ENCODE measurements at regions of chr14 and their contacts with region 1.

Region 1: GRCh38 chr14:77320238-77320935 is at the start of gene POMT2:
- DNase-seq: peak; percentile 97
- ATAC-seq: peak; percentile 85
- total RNA-seq, gene POMT2: 14.7 TPM

Region 2: DNA sequence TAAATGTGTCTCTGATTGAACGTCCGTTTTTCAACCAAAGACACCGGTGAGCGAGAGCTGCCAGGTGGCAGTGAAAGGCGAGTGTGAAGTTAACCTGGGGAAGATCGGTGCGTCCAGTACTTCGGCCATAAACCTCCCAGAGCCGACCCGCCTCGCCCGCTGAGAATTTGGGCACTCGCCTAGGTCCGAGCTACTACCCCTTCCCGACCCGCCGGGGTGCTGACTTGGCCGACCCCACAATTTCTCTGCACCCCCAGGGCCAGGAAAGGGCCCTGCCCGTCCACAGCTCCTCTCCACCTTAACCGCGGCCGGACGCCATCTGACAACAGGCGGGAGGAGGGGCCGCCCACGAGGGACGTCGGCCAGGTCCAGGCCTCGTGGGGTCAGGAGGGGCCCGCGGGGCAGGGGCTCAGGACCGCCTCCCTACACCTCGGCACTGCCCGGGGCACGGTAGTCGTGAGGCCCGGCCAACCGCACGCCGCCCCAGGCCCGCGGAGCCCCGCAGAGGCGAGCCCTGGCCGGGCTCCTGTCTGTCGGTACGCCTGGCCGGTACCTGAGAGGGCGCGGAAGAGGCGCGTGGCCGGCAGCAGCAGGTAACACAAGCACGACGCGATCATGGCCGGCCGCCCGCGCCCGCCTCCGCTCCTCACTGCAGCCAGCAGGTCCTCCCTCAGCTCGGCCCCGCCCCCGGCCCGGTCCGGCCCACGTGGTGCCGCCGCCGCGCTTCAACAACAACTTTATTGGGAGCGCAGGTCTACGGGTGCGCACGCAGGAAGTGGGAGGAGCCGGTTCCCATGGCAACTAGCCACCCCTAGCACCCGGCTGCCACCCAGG is 508.0 kb before region 1 on chr14 and contains the start of gene ANGEL1:
- intact Hi-C with region 1: loop called (anchors 5 kb)
- DNase-seq: peak; percentile 98
- ATAC-seq: peak; percentile 92
- total RNA-seq, gene ANGEL1: 10.5 TPM

Region 3: DNA sequence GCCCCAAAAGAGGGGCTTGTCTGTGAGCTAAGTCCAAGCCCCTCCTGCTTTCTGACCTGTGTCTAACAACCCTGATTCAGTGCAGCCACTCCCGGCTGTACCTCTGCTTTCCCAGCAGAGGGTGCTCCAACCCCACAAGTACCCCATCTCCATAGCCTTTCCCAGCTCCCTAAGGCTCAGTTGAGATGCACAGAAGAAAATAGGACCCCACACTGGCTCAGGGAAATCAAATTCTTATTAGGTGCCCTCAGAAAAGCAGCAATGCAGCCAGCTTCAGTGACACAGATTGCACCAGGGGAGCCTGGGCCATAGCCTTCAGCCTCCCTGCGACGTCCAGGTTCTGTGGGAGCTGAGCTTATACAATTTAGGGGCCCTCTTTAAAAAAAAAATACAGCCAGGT is 444.3 kb before region 1 on chr14:
- intact Hi-C with region 1: loop called (anchors 5 kb)
- DNase-seq: no peak
- ATAC-seq: peak; percentile 92

Region 4: GRCh38 chr14:77151918-77152588 is 168.3 kb before region 1 on chr14:
- intact Hi-C with region 1: loop called (anchors 1 kb)
- DNase-seq: no peak
- ATAC-seq: no peak

Region 5: DNA sequence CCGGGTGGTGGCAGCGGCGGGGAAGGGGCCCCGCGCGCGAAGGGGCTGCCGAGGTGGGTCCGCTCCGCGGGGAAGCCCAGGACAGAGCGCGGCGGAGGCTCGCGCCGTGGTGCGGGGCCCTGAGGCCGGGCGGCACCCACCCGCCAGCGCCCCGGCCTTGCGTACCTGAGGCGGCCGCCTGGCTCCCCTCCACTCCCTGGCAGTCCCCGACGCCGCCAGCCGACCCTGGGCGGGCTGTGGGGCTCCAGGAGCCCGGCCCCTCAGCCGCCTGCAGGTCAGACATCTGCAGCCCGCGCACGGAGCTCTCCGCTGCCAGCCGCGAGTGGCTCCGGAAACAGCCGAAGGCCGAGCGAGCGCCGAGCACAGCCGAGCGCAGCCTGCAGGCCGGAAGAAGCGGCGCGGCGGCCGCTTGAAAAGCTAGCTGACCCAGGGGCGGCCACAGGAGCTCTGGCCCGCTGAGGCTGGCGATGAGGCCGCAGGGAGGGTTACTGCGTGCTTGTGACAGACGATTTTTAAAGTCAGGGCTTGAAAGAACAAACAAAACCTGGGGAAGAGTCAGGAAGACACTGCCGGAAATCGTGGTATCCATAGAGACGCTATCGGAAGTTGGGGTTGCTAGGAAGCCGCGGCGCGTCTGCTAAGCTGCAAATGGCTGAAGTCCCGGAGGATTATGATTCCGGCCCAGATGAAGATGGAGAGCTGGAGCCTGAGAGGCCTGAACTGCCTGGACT is 56.5 kb after region 1 on chr14 and contains the starts of genes SAMD15 and TMED8:
- intact Hi-C with region 1: loop called (anchors 5 kb)
- DNase-seq: peak; percentile 93
- ATAC-seq: peak; percentile 98
- total RNA-seq, gene SAMD15: 0.08 TPM
- total RNA-seq, gene TMED8: 5.1 TPM

Region 6: GRCh38 chr14:77457522-77458290 is 137.3 kb after region 1 on chr14 and contains the starts of genes AHSA1 and VIPAS39:
- intact Hi-C with region 1: loop called (anchors 2 kb)
- DNase-seq: peak; percentile 95
- ATAC-seq: peak; percentile 99
- total RNA-seq, gene AHSA1: 194 TPM
- total RNA-seq, gene VIPAS39: 11.0 TPM

Region 7: DNA sequence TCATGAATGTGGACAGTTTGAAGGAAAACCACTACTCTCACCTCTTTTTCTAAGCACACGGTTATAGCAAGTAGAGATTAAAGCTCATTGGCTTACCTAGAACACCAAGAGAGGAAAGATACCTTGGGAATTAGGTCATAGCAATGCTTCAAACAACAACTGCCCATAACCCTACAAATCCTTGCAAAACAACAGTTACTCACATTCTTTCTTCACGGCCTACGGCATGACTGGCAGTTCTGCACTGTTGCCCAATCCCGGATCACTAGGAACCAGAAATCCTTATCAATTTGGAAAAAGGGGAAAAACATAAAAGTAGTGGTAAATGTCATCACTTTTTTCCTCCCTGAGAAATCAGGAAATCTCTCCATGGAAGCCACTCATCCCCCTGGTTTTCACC is 187.9 kb after region 1 on chr14:
- intact Hi-C with region 1: no loop called
- DNase-seq: no peak
- ATAC-seq: no peak